IMR-90 (cell line): ENCODE measurements at regions of chr1 and their contacts with region 1.

Region 1: GRCh38 chr1:107599220-107599619 is 365.8 kb downstream of the VAV3 start:
- DNase-seq: no peak
- ATAC-seq: no peak
- H3K4me3 ChIP-seq: no peak overlapping the region
- H3K27ac ChIP-seq: no peak overlapping the region
- H3K4me1 ChIP-seq: no peaks in the 10 kb centered on the region
- H3K27me3 ChIP-seq: no peaks in the 10 kb centered on the region
- CTCF ChIP-seq: no peak
- POLR2A ChIP-seq: no peak
- RAD21 ChIP-seq: no peak

Region 2: GRCh38 chr1:107294686-107295085 is 304.5 kb before region 1 on chr1:
- CTCF ChIA-PET with region 1: no interaction called
- POLR2A ChIA-PET with region 1: no interaction called
- dilution Hi-C with region 1: no loop called
- in situ Hi-C with region 1: no loop called
- intact Hi-C with region 1: loop called (anchors 5 kb)
- DNase-seq: peak; percentile 0
- ATAC-seq: no peak
- H3K4me3 ChIP-seq: no peak overlapping the region
- H3K27ac ChIP-seq: no peak overlapping the region
- H3K4me1 ChIP-seq: no peaks in the 10 kb centered on the region
- H3K27me3 ChIP-seq: no peaks in the 10 kb centered on the region
- CTCF ChIP-seq: no peak
- POLR2A ChIP-seq: no peak
- RAD21 ChIP-seq: no peak

Region 3: GRCh38 chr1:108732398-108732797 is 1133.2 kb after region 1 on chr1:
- CTCF ChIA-PET with region 1: no interaction called
- POLR2A ChIA-PET with region 1: no interaction called
- dilution Hi-C with region 1: no loop called
- in situ Hi-C with region 1: no loop called
- intact Hi-C with region 1: no loop called
- DNase-seq: peak; percentile 42
- ATAC-seq: no peak
- H3K4me3 ChIP-seq: no peak overlapping the region
- H3K27ac ChIP-seq: no peak overlapping the region
- H3K4me1 ChIP-seq: no peaks in the 10 kb centered on the region
- H3K27me3 ChIP-seq: peaks cover 8% of the 10 kb centered on the region
- CTCF ChIP-seq: no peak
- POLR2A ChIP-seq: no peak
- RAD21 ChIP-seq: no peak